CD4-positive, alpha-beta memory T cell (primary cell): ENCODE measurements at regions of chr7 and their contacts with region 1.

Region 1: GRCh38 chr7:24907311-24907886 is 72.6 kb downstream of the OSBPL3 start:
- DNase-seq: peak; percentile 16 to 76 (median 29)
- H3K4me3 ChIP-seq: peak overlapping the region; percentile 14 to 23
- H3K4me3 Mint-ChIP-seq: no peak overlapping the region
- H3K27ac ChIP-seq: peak overlapping the region; percentile 6
- H3K27ac Mint-ChIP-seq: no peak overlapping the region
- H3K4me1 ChIP-seq: peaks cover 88% of the 10 kb centered on the region
- H3K4me1 Mint-ChIP-seq: peaks cover 35 to 42% (median 38%) of the 10 kb centered on the region in 4 donors
- H3K27me3 ChIP-seq: no peaks in the 10 kb centered on the region
- H3K27me3 Mint-ChIP-seq: no peaks in the 10 kb centered on the region

Region 2: GRCh38 chr7:24877790-24878311 is 29.5 kb before region 1 on chr7:
- CTCF ChIA-PET with region 1: interaction called, 3 read pairs
- POLR2A ChIA-PET with region 1: interaction called, 3 read pairs
- intact Hi-C with region 1: loop called (anchors 5 kb)
- DNase-seq: peak in 1 of 5 donors; percentile 53
- H3K4me3 ChIP-seq: no peak overlapping the region
- H3K4me3 Mint-ChIP-seq: peak overlapping the region in 1 of 8 donors; percentile 73
- H3K27ac ChIP-seq: no peak overlapping the region
- H3K27ac Mint-ChIP-seq: peak overlapping the region in 3 of 7 donors; percentile 7 to 75 (median 43)
- H3K4me1 ChIP-seq: peaks cover 28% of the 10 kb centered on the region
- H3K4me1 Mint-ChIP-seq: peaks cover 8 to 40% (median 22%) of the 10 kb centered on the region in 4 donors
- H3K27me3 ChIP-seq: no peaks in the 10 kb centered on the region
- H3K27me3 Mint-ChIP-seq: no peaks in the 10 kb centered on the region

Region 3: DNA sequence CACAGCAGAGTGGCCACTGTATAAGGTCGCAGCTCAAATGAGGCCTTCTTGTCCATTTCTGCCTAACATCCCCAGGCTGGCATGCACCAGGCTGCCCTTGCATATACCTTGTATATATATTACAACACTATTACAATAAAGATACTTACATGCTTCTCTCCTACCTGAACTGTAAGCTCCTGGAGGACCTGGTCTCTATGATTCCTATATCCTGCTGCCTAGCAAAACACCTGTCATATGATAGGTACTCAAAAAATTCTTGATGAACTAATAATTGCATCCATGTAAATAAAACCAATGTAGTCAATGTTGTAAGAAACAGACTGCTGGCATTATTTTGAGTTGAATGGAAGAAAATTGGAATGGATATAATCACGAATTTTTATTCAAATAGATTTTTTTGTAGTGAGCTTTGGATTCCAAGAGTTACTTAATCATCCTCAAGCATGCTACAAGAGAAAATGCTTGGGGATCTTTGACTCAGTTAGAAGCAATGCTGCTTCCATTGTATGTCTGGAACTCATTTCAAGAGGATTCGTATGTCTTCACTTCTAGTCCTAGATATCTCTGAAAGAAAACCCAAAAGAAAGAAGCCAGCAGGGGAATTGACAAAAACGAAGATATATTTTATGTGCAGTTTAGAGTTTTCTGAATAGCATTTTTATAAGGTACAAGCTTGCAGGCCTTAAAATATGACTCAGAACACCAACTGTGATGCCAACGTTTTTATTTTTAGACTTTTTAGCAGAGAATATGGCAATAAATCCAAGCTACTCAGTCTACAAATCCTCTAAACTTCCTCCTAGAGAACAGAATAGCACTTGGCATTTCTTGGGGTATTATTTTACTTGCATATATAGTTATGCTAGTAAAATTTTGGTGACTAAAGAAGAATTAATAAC is 19.5 kb after region 1 on chr7:
- CTCF ChIA-PET with region 1: interaction called, 5 read pairs
- POLR2A ChIA-PET with region 1: no interaction called
- intact Hi-C with region 1: loop called (anchors 2 kb)
- DNase-seq: no peak
- H3K4me3 ChIP-seq: no peak overlapping the region
- H3K4me3 Mint-ChIP-seq: no peak overlapping the region
- H3K27ac ChIP-seq: no peak overlapping the region
- H3K27ac Mint-ChIP-seq: peak overlapping the region in 5 of 7 donors; percentile 40 to 86 (median 77)
- H3K4me1 ChIP-seq: peaks cover 45% of the 10 kb centered on the region
- H3K4me1 Mint-ChIP-seq: peaks cover 40 to 71% (median 58%) of the 10 kb centered on the region in 4 donors
- H3K27me3 ChIP-seq: no peaks in the 10 kb centered on the region
- H3K27me3 Mint-ChIP-seq: no peaks in the 10 kb centered on the region

Region 4: DNA sequence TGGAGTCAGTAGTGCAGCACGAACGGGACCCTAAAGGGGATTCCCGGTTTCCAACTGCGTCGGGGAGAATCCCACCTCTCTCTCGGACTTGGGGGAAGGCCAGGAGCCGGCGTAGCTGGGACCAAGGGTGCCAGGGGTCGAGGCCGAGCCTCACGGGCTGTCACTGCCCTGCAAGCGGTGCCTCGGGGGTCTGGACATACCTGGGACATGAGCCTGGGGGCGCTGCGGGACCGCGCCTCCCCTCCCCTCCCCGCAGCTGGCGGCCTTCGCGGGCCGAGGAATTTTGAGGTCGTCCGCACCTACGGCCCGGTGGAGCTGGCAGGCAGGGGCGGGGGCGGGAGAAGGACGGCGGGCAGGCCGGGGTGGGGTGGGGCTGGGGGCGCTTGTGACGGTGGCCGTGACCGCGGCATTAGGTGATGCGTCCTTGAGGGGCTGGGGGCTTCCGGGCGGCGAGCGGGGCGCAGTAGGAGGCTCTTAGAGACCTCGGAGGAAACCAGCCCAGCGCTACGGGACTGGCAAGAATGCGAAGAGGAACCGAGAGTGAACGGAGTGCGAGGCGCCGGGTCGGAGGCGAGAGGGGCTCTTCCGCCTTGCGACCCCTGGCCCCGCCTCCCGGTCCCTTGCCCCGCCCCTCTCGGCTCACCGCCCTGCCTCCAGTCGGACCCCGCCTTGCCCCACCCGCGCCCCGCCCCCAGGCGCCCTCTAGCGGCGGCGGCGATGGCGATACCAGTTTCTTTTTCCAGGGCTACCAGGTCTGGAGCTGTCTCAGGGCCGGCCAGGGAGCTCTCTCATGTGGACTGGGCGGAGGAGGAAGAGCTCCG is 272.6 kb after region 1 on chr7:
- CTCF ChIA-PET with region 1: no interaction called
- POLR2A ChIA-PET with region 1: no interaction called
- intact Hi-C with region 1: no loop called
- DNase-seq: peak; percentile 90 to 95 (median 91)
- H3K4me3 ChIP-seq: peak overlapping the region; percentile 45 to 71
- H3K4me3 Mint-ChIP-seq: peak overlapping the region; percentile 88 to 95 (median 92)
- H3K27ac ChIP-seq: peak overlapping the region; percentile 68
- H3K27ac Mint-ChIP-seq: peak overlapping the region; percentile 76 to 96 (median 93)
- H3K4me1 ChIP-seq: peaks cover 12% of the 10 kb centered on the region
- H3K4me1 Mint-ChIP-seq: peaks cover 5 to 27% (median 18%) of the 10 kb centered on the region in 4 donors
- H3K27me3 ChIP-seq: no peaks in the 10 kb centered on the region
- H3K27me3 Mint-ChIP-seq: no peaks in the 10 kb centered on the region